Esophagus muscularis mucosa (tissue), 4 donors: ENCODE measurements at regions of chr4 and their contacts with region 1.

Region 1: GRCh38 chr4:88659055-88659889 is 38.4 kb downstream of the NAP1L5 start:
- DNase-seq: no peak
- H3K4me3 ChIP-seq: no peak overlapping the region
- H3K27ac ChIP-seq: peak overlapping the region; percentile 57 to 78 (median 69)
- H3K4me1 ChIP-seq: peaks cover 6 to 29% (median 23%) of the 10 kb centered on the region in 4 donors
- H3K27me3 ChIP-seq: no peaks in the 10 kb centered on the region
- CTCF ChIP-seq: peak in 2 of 3 experiments; percentile 88 to 90
- EP300 ChIP-seq: no peak
- POLR2A ChIP-seq: no peak

Region 2: DNA sequence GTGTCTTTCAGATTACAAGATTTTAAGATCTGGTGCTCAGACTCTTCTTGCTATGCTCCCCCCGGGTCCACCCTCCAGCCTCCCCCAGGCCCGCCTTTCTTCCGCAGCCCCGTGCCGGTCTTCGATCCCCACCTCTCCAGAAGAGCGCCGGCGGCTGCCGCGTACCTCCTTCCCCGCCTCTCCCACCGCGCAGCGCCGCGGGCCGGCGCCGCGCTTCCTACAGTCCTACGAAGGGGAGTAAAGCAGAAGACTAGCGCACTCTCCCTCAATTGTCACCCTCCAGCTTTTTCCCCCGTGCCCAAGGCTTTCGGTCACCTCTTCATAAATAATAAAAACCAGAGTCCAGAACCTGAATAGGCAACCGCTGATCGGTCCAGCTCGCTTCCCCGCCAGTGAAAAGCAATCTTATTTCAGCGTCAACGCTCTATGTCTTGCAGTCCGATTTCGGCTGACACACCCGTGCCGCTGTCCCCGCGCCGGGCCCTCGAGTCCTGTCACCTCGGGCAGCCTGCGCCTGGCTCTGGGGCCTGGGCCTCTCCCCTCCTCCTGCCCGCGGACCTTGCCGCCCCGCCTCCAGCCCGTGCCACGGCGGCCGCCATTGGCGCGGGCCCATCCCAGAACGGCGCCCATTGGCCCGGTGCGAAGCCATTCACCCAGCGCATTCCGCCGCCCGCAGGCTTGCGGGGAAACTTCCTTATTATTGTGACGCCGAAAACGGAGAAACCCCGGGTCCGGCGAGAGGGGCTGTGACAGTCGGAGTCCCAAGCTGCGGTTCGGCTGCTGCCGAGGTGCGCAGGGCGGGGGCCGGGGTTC is 67.3 kb before region 1 on chr4 and contains the start of gene HERC3:
- intact Hi-C with region 1: loop called (anchors 5 kb)
- DNase-seq: peak; percentile 97
- H3K4me3 ChIP-seq: peak within 1 kb of the TSS; percentile 83 to 97 (median 91)
- H3K27ac ChIP-seq: peak within 1 kb of the TSS; percentile 96 to 99 (median 98)
- H3K4me1 ChIP-seq: peaks cover 10 to 51% (median 37%) of the 10 kb centered on the region in 4 donors
- H3K27me3 ChIP-seq: no peaks in the 10 kb centered on the region
- CTCF ChIP-seq: peak in 1 of 3 experiments; percentile 29
- EP300 ChIP-seq: no peak
- POLR2A ChIP-seq: peak; percentile 6
- total RNA-seq, gene HERC3: 39.8 to 58.2 (median 51.2) TPM